ENCODE measurements at regions of chr16 and their contacts with region 1.

Region 1: DNA sequence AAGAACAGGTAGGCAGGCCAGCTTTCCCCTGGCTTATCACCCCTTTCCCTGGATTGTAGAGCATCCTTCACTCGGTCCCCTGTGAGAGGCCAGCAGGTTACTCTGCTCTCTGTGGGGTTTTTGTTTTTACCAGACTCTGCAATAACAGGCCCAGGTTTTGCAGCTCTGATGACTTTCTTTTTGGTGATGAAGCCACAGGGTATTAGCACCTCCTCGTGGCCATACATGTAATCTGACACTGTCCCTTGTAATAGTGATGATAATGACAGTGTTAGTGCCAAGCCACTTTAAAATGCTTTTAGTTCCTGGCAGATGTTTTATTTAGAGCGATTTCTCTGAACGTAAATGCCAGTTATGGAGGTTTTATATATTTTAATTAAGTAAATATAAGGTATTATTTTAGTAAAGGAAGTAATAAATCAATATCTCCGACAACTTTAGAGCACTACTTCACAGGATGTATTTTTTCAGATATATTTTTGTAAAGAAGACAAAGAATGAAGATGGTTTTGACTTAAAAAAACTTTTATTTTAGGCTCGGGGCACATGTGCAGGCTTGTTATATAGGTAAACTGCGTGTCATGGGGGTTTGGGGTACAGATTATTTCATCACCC is 38.0 kb upstream of the CPHXL start:
- DNase-seq: peak; percentile 57 to 69 (median 67)
- H3K4me3 ChIP-seq: no peak overlapping the region
- H3K4me3 Mint-ChIP-seq: no peak overlapping the region
- H3K27ac ChIP-seq: no peak overlapping the region
- H3K27ac Mint-ChIP-seq: peak overlapping the region in 1 of 7 donors; percentile 3
- H3K4me1 ChIP-seq: no peaks in the 10 kb centered on the region
- H3K4me1 Mint-ChIP-seq: peaks cover 4 to 8% (median 6%) of the 10 kb centered on the region in 4 donors
- H3K27me3 ChIP-seq: no peaks in the 10 kb centered on the region
- H3K27me3 Mint-ChIP-seq: peaks cover 0 to 2% of the 10 kb centered on the region in 2 donors

Region 2: DNA sequence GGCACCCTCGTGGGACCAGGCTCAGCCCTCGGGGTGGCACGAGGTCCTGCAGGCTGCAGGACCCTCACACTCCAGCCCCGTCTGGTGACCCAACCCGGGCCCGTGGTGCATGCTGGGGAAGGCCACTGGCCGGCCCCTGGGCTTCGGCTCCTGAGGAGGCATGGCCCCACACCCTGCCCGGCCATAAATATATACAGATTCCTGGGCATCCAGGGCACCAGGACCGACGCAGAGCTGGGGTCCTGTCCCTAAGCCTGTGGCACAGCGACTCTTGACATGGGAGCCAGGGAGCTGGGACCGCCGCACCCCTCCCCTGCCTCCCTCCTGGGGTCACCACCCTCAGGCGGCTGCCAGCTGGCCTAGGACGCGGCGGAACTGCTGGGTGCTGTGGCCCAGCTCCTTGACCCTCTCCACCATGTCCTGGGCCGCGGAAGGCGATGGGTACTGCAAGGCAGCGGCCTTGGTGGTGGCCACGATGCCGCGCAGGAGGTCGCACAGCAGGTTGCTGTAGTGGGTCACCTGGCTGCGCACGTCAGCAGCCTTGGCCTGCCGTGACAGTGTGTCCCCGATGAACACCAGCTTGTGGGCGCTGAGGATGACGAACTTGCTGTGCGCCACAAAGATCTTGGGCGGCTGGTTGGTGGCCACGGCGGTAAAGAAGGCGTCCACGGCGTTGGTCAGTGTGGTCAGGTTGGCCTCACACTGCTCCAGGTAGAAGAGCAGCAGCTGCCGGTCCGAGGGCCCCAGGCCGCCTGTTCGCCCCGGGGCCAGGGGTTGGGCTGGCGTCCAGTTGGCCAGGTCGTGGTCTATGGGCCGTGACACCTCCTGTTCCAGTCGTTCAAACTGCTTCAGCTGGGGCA is 534.9 kb before region 1 on chr16:
- CTCF ChIA-PET with region 1: interaction called, 6 read pairs
- POLR2A ChIA-PET with region 1: no interaction called
- intact Hi-C with region 1: loop called (anchors 1 kb)
- DNase-seq: no peak
- H3K4me3 ChIP-seq: no peak overlapping the region
- H3K4me3 Mint-ChIP-seq: no peak overlapping the region
- H3K27ac ChIP-seq: no peak overlapping the region
- H3K27ac Mint-ChIP-seq: no peak overlapping the region
- H3K4me1 ChIP-seq: peaks cover 6% of the 10 kb centered on the region
- H3K4me1 Mint-ChIP-seq: peaks cover 0 to 5% (median under 1%) of the 10 kb centered on the region in 4 donors
- H3K27me3 ChIP-seq: no peaks in the 10 kb centered on the region
- H3K27me3 Mint-ChIP-seq: peaks cover 0 to 1% of the 10 kb centered on the region in 2 donors

Region 3: DNA sequence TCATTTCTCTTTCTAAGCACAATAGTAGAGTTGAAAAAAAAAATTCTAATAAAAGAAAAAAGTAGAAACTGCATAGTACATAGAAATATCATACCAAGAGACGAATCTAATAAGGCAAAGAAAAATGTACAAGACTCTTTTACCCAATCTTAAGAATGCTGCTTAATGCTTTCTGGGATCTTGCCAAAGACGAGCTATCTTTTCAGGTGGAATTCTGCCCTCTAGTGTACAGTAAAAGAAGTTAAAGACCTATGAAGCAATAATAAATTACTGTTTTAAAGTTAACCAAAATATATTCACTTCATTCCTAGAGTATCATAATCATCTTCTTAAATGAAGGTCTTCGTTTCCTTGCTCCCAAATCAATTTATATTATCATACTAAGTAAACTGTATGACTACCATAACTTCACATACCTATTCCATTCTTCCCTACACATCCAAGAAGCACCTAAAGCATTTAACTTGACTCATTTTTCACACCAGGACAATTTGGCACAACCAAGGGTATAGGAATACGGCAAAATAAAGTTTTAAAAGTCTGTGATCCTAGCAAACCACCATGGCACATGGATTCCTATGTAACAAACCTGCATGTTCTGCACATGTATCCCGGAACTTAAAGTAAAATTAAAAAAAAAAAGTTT is 378.6 kb before region 1 on chr16:
- CTCF ChIA-PET with region 1: no interaction called
- POLR2A ChIA-PET with region 1: no interaction called
- intact Hi-C with region 1: loop called (anchors 1 kb)
- DNase-seq: peak in 4 of 5 donors; percentile 53 to 63 (median 60)
- H3K4me3 ChIP-seq: no peak overlapping the region
- H3K4me3 Mint-ChIP-seq: no peak overlapping the region
- H3K27ac ChIP-seq: no peak overlapping the region
- H3K27ac Mint-ChIP-seq: no peak overlapping the region
- H3K4me1 ChIP-seq: peaks cover 26% of the 10 kb centered on the region
- H3K4me1 Mint-ChIP-seq: peaks cover 20 to 38% (median 34%) of the 10 kb centered on the region in 4 donors
- H3K27me3 ChIP-seq: no peaks in the 10 kb centered on the region
- H3K27me3 Mint-ChIP-seq: no peaks in the 10 kb centered on the region

Region 4: DNA sequence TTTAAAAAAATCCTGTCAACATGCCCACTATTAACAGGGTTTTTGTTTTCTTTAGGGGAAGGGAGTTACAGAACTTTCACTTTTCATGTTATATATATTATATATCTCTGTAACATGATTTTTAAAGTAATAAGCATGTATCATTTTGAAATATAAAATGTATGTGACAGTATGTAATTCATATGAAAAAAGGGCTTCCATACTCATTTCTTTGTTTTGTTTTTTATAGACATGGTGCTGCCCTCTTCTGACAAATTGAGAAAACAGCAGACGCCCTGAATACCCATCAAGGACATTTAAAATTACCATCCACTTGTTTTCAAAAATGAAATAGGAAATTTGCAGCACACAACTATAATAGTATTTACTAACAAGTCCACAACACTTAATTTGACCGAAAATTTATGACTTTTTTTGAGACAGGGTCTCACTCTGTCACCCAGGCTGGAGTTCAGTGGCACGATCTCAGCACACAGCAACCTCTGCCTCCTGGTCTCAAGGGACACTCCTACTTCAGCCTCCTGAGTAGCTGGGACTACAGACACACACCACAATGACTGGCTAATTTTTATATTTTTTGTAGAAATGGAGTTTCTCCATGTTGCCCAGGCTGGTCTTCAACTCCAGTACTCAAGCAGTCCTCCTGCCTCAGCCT is 361.3 kb before region 1 on chr16:
- CTCF ChIA-PET with region 1: interaction called, 4 read pairs
- POLR2A ChIA-PET with region 1: no interaction called
- intact Hi-C with region 1: loop called (anchors 2 kb)
- DNase-seq: peak in 4 of 5 donors; percentile 23 to 35 (median 32)
- H3K4me3 ChIP-seq: no peak overlapping the region
- H3K4me3 Mint-ChIP-seq: no peak overlapping the region
- H3K27ac ChIP-seq: no peak overlapping the region
- H3K27ac Mint-ChIP-seq: peak overlapping the region in 1 of 7 donors; percentile 51
- H3K4me1 ChIP-seq: no peaks in the 10 kb centered on the region
- H3K4me1 Mint-ChIP-seq: peaks cover 0 to 3% (median 1%) of the 10 kb centered on the region in 4 donors
- H3K27me3 ChIP-seq: no peaks in the 10 kb centered on the region
- H3K27me3 Mint-ChIP-seq: no peaks in the 10 kb centered on the region

Region 5: GRCh38 chr16:75471723-75472633 is 292.3 kb before region 1 on chr16:
- CTCF ChIA-PET with region 1: interaction called, 104 read pairs
- POLR2A ChIA-PET with region 1: interaction called, 5 read pairs
- intact Hi-C with region 1: no loop called
- DNase-seq: peak in 4 of 5 donors; percentile 36 to 51 (median 48)
- H3K4me3 ChIP-seq: no peak overlapping the region
- H3K4me3 Mint-ChIP-seq: no peak overlapping the region
- H3K27ac ChIP-seq: no peak overlapping the region
- H3K27ac Mint-ChIP-seq: peak overlapping the region in 3 of 7 donors; percentile 26 to 58 (median 56)
- H3K4me1 ChIP-seq: no peaks in the 10 kb centered on the region
- H3K4me1 Mint-ChIP-seq: peaks cover 0 to 4% (median 3%) of the 10 kb centered on the region in 4 donors
- H3K27me3 ChIP-seq: no peaks in the 10 kb centered on the region
- H3K27me3 Mint-ChIP-seq: no peaks in the 10 kb centered on the region

Region 6: DNA sequence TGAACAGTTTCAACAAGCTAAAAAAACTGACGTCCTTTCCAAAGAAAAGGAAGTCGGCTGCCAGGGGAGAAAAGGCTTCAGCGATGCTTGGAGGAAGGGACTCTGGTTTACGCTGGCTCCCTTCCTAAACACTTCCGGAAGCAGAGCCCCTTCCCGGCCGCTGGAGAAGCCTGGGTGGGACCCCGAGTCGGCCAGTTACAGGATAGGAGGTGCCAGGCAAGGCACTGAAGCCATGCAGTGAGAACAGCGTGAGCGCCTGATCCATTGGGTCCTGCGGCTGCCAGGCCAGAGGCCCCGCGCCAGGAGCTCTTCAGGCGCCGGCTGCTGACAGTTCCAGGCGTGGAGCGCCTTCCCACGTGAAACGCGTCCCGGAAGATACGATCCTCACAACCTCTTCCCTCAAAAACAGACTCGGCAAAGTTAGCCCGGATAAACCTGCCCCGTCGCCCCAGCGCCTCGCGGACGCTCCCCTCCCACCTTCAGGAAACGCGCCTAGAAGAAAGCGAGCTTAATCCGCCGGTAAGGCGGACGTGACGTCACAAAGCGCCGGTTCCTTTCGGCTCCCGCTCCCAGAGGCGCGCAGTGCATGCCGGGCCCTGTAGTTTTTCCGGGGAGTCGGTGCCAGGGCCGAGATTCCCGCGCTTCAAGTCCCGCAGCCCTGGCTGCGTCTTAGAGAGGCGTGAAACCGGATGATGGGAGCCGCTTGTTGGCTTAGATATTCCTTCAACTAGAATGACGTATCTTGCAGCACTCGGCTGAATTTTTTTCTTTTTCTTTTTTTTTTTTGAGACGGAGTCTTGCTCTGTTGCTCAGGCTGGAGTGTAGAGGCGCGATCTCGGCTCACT is 141.3 kb before region 1 on chr16 and contains the start of gene ADAT1:
- CTCF ChIA-PET with region 1: interaction called, 7 read pairs
- POLR2A ChIA-PET with region 1: interaction called, 3 read pairs
- intact Hi-C with region 1: loop called (anchors 1 kb)
- DNase-seq: peak; percentile 95 to 99 (median 98)
- H3K4me3 ChIP-seq: peak within 1 kb of the TSS; percentile 86 to 90
- H3K4me3 Mint-ChIP-seq: peak within 1 kb of the TSS; percentile 90 to 98 (median 97)
- H3K27ac ChIP-seq: peak within 1 kb of the TSS; percentile 96
- H3K27ac Mint-ChIP-seq: peak within 1 kb of the TSS; percentile 97 to 99 (median 98)
- H3K4me1 ChIP-seq: peaks cover 59% of the 10 kb centered on the region
- H3K4me1 Mint-ChIP-seq: peaks cover 46 to 87% (median 58%) of the 10 kb centered on the region in 4 donors
- H3K27me3 ChIP-seq: no peaks in the 10 kb centered on the region
- H3K27me3 Mint-ChIP-seq: peaks cover 0 to 3% of the 10 kb centered on the region in 2 donors
- total RNA-seq, gene ADAT1: 88.3 to 93.9 TPM